ENCODE measurements at regions of chr7 and their contacts with region 1.

Region 1: DNA sequence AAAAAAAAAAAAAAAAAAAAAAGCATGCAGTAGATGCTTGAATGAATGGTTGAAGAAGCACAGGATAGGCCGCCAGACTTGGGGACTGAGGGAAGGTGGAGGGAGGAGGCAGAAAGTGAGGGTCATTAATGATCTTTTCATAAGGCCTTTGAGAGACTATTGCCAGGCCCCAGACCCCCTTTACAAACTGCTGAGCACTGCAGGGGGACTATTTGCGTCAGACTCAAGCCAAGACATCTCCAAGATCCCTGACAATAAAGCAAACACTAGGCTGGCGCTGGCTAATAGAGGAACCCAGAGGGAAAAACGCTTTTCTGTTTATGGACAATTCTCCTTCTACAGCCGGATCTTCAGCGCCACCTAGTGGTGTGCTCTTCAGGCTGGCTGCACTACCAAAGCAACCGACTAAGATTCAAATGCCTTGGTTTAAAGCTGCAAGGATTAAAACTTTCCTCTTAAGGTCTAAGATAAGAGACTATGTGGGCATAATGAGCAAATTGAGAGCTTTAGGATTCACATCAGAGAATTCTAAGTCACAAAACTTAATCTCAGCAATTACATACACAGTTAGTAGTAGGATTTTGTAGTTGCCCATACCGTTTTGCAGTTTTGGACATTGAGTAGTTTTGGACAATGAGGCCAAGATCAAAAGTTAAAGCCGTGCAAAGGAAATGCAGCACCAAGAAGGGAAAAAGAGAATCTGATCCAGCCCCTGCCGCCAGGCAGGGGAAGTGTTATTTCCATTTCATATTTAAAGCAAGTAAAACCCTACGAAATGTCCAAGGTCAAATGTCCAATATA is 17.9 kb upstream of the AGK start:
- DNase-seq: peak; percentile 63
- ATAC-seq: peak; percentile 63
- H3K4me3 Mint-ChIP-seq: no peak overlapping the region
- H3K27ac Mint-ChIP-seq: no peak overlapping the region
- H3K4me1 Mint-ChIP-seq: no peaks in the 10 kb centered on the region
- H3K27me3 Mint-ChIP-seq: peaks cover 28% of the 10 kb centered on the region

Region 2: GRCh38 chr7:141522657-141523342 is 10.5 kb before region 1 on chr7:
- CTCF ChIA-PET with region 1: interaction called, 13 read pairs
- DNase-seq: no peak
- ATAC-seq: no peak
- H3K4me3 Mint-ChIP-seq: no peak overlapping the region
- H3K27ac Mint-ChIP-seq: no peak overlapping the region
- H3K4me1 Mint-ChIP-seq: peaks cover 5% of the 10 kb centered on the region
- H3K27me3 Mint-ChIP-seq: peaks cover 10% of the 10 kb centered on the region

Region 3: DNA sequence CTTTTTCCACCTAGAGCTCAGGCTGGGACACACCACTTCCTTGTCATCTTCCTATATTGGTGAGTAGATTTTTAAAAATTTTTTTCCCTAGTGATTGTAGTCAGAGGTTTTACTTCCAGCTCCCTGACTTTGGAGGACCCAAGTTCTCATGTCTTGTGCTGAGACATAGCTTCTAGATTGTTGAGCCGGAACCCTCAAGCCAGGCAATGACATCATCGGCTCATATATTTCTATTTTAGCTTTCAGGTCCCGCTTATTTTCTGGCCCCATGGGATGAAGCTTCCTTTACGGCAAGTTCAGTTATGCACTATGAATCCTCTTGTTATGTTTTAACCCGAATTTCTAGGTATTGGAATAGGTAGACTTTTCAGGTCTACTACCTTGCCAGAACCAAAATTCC is 10.9 kb after region 1 on chr7:
- CTCF ChIA-PET with region 1: interaction called, 12 read pairs
- DNase-seq: no peak
- ATAC-seq: no peak
- H3K4me3 Mint-ChIP-seq: no peak overlapping the region
- H3K27ac Mint-ChIP-seq: no peak overlapping the region
- H3K4me1 Mint-ChIP-seq: no peaks in the 10 kb centered on the region
- H3K27me3 Mint-ChIP-seq: peaks cover 7% of the 10 kb centered on the region

Region 4: GRCh38 chr7:141731476-141732149 is 198.3 kb after region 1 on chr7:
- CTCF ChIA-PET with region 1: no interaction called
- DNase-seq: no peak
- ATAC-seq: no peak
- H3K4me3 Mint-ChIP-seq: no peak overlapping the region
- H3K27ac Mint-ChIP-seq: no peak overlapping the region
- H3K4me1 Mint-ChIP-seq: peaks cover 4% of the 10 kb centered on the region
- H3K27me3 Mint-ChIP-seq: no peaks in the 10 kb centered on the region

Measured in activated CD8-positive, alpha-beta memory T cell treated with anti-CD3 and anti-CD28 coated beads, Interleukin-2, amount 10 ng/mL, durations not matched to agents 7 days and 5 days (primary cell).